Endothelial cell of umbilical vein (primary cell): ENCODE measurements at regions of chr9 and their contacts with region 1.

Region 1: DNA sequence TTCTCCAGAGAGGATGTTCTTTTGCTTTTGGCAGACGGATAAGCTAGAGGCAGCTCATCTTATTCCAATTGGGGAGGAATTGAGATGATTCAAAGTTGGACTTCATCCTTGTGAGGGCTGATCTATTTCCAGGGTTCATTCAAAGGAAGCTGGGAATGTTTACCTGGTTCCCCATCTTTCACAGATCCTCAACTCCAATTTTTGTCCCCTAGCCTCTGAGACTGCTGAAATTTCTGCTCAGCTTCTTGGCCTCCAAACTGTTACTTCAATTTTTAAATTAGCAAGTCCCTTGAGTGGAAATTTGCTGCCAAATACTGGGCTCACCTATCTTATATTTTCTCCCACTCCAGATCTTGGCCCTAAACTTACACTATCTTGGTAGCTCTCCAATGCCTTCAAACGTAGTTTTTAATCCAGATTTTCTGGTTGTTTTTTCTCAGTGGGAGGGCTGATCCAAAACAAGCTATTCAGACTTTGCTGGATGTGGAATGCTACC is 93.9 kb upstream of the NEK6 start:
- DNase-seq: no peak
- H3K4me3 ChIP-seq: no peak overlapping the region
- H3K27ac ChIP-seq: no peak overlapping the region
- H3K4me1 ChIP-seq: no peaks in the 10 kb centered on the region
- H3K27me3 ChIP-seq: peaks cover 10 to 12% of the 10 kb centered on the region in 2 experiments
- CTCF ChIP-seq: no peak
- POLR2A ChIP-seq: no peak

Region 2: GRCh38 chr9:124182741-124183140 is 18.9 kb after region 1 on chr9:
- CTCF ChIA-PET with region 1: interaction called, 10 read pairs
- POLR2A ChIA-PET with region 1: no interaction called
- dilution Hi-C with region 1: no loop called
- intact Hi-C with region 1: no loop called
- DNase-seq: no peak
- H3K4me3 ChIP-seq: no peak overlapping the region
- H3K27ac ChIP-seq: no peak overlapping the region
- H3K4me1 ChIP-seq: no peaks in the 10 kb centered on the region
- H3K27me3 ChIP-seq: peaks cover 14 to 23% of the 10 kb centered on the region in 2 experiments
- CTCF ChIP-seq: no peak
- POLR2A ChIP-seq: no peak